Heart left ventricle (tissue), 16 donors: ENCODE measurements at regions of chr9 and their contacts with region 1.

Region 1: GRCh38 chr9:134178768-134179551 is 14.6 kb upstream of the RNU6ATAC start:
- DNase-seq: peak in 4 of 5 donors; percentile 61 to 77 (median 67)
- ATAC-seq: peak; percentile 20 to 56 (median 38)
- H3K4me3 ChIP-seq: no peak overlapping the region
- H3K27ac ChIP-seq: no peak overlapping the region
- H3K4me1 ChIP-seq: peaks cover 0 to 30% (median 21%) of the 10 kb centered on the region in 12 donors
- H3K27me3 ChIP-seq: peaks cover 0 to 31% (median 10%) of the 10 kb centered on the region in 9 donors
- CTCF ChIP-seq: no peak
- POLR2A ChIP-seq: no peak

Region 2: GRCh38 chr9:133981958-133982681 is 196.8 kb before region 1 on chr9:
- intact Hi-C with region 1: no loop called
- DNase-seq: peak in 1 of 5 donors; percentile 63
- ATAC-seq: no peak
- H3K4me3 ChIP-seq: no peak overlapping the region
- H3K27ac ChIP-seq: no peak overlapping the region
- H3K4me1 ChIP-seq: peaks cover 5 to 22% (median 19%) of the 10 kb centered on the region in 12 donors
- H3K27me3 ChIP-seq: no peaks in the 10 kb centered on the region
- CTCF ChIP-seq: no peak
- POLR2A ChIP-seq: no peak

Region 3: GRCh38 chr9:134210908-134211810 is 32.2 kb after region 1 on chr9:
- intact Hi-C with region 1: loop called in 2 of 10 experiments (anchors 5 kb)
- DNase-seq: peak in 3 of 5 donors; percentile 50 to 64 (median 51)
- ATAC-seq: peak; percentile 31 to 60 (median 56)
- H3K4me3 ChIP-seq: no peak overlapping the region
- H3K27ac ChIP-seq: peak overlapping the region; percentile 40 to 79 (median 72)
- H3K4me1 ChIP-seq: peaks cover 0 to 61% (median 23%) of the 10 kb centered on the region in 12 donors
- H3K27me3 ChIP-seq: no peaks in the 10 kb centered on the region
- CTCF ChIP-seq: no peak
- POLR2A ChIP-seq: no peak

Region 4: DNA sequence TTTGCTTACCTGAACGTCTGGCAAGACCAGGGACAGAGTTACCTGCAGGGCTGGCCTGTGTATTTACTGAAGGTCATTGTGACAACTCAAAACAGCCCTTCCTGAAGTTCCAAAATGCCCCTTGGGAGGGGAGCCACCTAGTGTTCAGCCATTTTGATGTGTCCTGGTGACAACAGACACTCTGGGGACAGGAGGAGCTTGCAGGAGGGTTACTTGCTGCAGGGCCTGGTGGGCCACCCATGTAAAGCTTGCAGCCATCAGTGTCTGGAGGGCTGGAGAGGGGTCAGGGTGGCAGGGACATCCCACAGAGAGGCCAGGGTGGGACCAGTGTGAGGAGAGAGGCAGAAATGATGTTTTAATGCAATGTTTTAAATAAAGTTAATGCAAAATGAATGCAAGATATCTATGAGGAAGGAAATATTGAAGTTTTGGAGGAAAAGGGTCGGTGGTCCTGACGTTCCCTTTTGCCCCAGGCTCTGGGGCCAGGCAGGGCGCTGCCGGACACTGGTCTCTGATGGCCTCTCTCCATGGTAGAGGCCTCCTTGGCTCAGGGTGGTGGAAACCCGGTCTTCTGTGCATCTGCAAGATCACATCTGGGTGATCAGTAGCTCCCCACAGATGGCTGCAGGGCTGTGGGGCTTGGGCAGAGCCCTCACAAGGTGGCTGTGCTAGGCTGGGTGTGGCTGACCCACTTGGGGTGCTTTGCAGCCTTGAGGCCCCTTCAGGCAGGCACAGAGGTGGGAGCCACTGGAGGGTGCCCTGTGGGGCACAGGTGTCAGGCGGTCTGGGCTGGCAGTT is 39.1 kb after region 1 on chr9:
- intact Hi-C with region 1: loop called in 2 of 10 experiments (anchors 5 kb)
- DNase-seq: peak in 3 of 5 donors; percentile 18 to 30 (median 21)
- ATAC-seq: peak in 1 of 4 donors; percentile 24
- H3K4me3 ChIP-seq: no peak overlapping the region
- H3K27ac ChIP-seq: no peak overlapping the region
- H3K4me1 ChIP-seq: peaks cover 0 to 35% (median 20%) of the 10 kb centered on the region in 12 donors
- H3K27me3 ChIP-seq: no peaks in the 10 kb centered on the region
- CTCF ChIP-seq: peak in 9 of 12 donors; percentile 14 to 36 (median 20)
- POLR2A ChIP-seq: no peak

Region 5: DNA sequence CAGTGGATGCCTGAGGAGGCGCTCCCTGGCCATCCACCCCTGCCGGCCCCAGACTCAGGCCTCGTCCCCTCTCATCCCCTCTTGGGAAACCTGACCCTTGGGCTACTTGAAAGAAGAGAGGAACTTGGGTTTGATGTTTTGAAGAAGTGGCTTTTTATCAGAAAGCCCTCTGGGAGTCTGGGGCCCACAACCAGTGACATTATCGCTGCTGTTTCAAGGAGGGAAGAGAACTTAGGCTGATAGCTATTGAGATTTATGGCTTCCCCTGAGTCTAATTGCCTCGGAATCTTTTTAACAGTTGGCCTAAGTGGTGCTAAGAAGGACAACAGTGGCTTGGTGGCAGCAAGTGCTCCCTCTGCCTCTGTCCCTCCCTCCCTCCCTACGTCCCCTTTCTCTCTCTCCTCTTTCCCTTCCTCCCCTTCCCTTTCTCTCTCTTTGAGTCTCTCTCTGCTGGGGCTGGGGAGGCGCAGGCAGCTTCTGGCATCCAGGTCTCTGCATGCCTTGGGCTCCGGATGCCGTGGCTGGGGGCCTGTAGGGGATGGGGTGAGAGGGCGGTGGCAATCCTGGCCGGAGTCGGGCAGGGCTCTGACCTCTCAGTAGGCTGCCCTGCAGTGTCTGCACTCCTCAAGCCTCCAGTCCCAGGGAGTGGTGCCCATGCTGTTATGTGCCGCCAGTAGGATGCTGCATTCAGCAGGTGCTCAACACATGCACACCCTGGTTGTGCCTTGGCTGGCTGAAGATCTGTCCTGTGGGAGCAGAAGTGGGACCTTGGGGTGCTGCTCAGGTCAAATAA is 97.7 kb after region 1 on chr9:
- intact Hi-C with region 1: loop called in 4 of 10 experiments (anchors 5 to 10 kb)
- DNase-seq: no peak
- ATAC-seq: no peak
- H3K4me3 ChIP-seq: no peak overlapping the region
- H3K27ac ChIP-seq: no peak overlapping the region
- H3K4me1 ChIP-seq: peaks cover 0 to 12% (median 0%) of the 10 kb centered on the region in 12 donors
- H3K27me3 ChIP-seq: peaks cover 0 to 4% (median 0%) of the 10 kb centered on the region in 9 donors
- CTCF ChIP-seq: no peak
- POLR2A ChIP-seq: no peak

Region 6: DNA sequence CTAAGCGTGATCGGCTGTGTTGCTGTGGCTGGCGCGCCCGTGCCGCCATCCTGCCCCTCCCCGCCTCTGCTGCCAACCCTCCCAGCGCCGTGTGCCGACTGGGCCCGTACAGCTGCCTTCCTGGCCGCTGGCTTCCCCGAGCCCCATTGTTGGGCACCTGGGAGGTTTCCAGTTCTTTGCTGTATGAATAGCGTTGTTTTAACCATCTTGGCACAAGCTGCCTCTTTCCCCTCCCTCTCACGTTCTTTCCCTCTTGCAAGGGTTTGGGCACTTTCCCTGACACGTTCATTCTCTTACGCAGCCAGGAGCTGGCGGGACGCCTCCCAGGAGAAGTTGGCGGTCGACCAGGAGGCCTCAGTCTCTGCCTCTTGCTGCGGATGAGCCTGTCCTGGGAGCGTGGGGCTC is 104.2 kb after region 1 on chr9:
- intact Hi-C with region 1: loop called in 4 of 10 experiments (anchors 5 to 10 kb)
- DNase-seq: peak; percentile 45 to 87 (median 80)
- ATAC-seq: peak; percentile 69 to 84 (median 75)
- H3K4me3 ChIP-seq: no peak overlapping the region
- H3K27ac ChIP-seq: peak overlapping the region; percentile 21 to 83 (median 67)
- H3K4me1 ChIP-seq: peaks cover 0 to 25% (median 13%) of the 10 kb centered on the region in 12 donors
- H3K27me3 ChIP-seq: peaks cover 0 to 3% (median 0%) of the 10 kb centered on the region in 9 donors
- CTCF ChIP-seq: no peak
- POLR2A ChIP-seq: no peak

Region 7: GRCh38 chr9:134641173-134641985 is 462.4 kb after region 1 on chr9 and contains the start of gene COL5A1:
- intact Hi-C with region 1: loop called in 1 of 10 experiments (anchors 10 kb)
- DNase-seq: peak; percentile 91 to 94 (median 93)
- ATAC-seq: peak; percentile 81 to 92 (median 90)
- H3K4me3 ChIP-seq: peak within 1 kb of the TSS; percentile 59 to 89 (median 76)
- H3K27ac ChIP-seq: peak within 1 kb of the TSS; percentile 27 to 96 (median 82)
- H3K4me1 ChIP-seq: peaks cover 0 to 35% (median 11%) of the 10 kb centered on the region in 12 donors
- H3K27me3 ChIP-seq: peaks cover 0 to 21% (median 0%) of the 10 kb centered on the region in 9 donors
- CTCF ChIP-seq: peak in 5 of 12 donors; percentile 16 to 50 (median 35)
- POLR2A ChIP-seq: peak in 1 of 2 donors; percentile 67
- total RNA-seq, gene COL5A1: 7.6 to 91.3 (median 13.4) TPM

Region 8: GRCh38 chr9:134738869-134739659 is 560.1 kb after region 1 on chr9:
- intact Hi-C with region 1: loop called in 6 of 10 experiments (anchors 5 to 10 kb)
- DNase-seq: peak; percentile 61 to 87 (median 79)
- ATAC-seq: peak; percentile 16 to 64 (median 49)
- H3K4me3 ChIP-seq: no peak overlapping the region
- H3K27ac ChIP-seq: no peak overlapping the region
- H3K4me1 ChIP-seq: peaks cover 0 to 39% (median 11%) of the 10 kb centered on the region in 12 donors
- H3K27me3 ChIP-seq: no peaks in the 10 kb centered on the region
- CTCF ChIP-seq: peak; percentile 81 to 93 (median 92)
- POLR2A ChIP-seq: no peak